Caco-2 (cell line): ENCODE measurements at regions of chr15 and their contacts with region 1.

Region 1: DNA sequence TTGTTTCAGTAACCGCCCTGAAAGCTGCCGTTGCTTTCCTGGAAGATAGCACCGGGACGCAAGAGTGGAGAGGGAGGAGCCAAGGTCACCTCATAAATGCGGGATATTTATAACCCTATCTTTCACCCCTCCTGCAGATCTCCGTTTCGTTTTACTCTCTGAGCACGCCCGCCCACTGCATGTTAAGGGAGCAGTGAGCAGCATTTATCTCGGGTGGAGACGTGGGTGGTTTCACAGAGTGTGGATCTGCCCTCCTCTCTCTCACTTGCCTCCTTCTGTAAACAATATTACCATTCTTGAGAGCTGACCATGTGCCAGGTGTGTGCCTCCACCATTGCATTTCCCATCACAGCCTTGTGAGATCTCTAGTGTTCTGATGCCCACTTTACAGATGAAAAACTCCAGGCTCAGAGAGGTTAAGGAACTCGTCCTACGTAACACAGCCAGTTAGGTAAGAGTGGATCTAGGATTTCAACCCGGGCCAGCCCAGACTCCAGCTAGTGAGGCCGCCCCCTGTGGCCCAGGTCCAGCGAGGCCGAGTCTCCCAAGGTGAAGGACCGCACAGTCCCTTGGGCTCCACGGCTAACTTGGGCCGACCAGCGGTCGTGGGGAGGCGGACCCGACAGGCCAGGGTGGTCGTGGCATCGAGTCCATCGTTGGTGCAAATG is 16.9 kb upstream of the SEMA4B start:
- DNase-seq: peak; percentile 63 to 77
- H3K4me3 ChIP-seq: peak overlapping the region; percentile 74
- H3K4me3 Mint-ChIP-seq: peak overlapping the region; percentile 82
- H3K27ac Mint-ChIP-seq: peak overlapping the region; percentile 69
- H3K4me1 ChIP-seq: peaks cover 11% of the 10 kb centered on the region
- H3K4me1 Mint-ChIP-seq: no peaks in the 10 kb centered on the region
- H3K27me3 ChIP-seq: no peaks in the 10 kb centered on the region
- H3K27me3 Mint-ChIP-seq: no peaks in the 10 kb centered on the region
- CTCF ChIP-seq: peak in 1 of 2 experiments; percentile 17

Region 2: DNA sequence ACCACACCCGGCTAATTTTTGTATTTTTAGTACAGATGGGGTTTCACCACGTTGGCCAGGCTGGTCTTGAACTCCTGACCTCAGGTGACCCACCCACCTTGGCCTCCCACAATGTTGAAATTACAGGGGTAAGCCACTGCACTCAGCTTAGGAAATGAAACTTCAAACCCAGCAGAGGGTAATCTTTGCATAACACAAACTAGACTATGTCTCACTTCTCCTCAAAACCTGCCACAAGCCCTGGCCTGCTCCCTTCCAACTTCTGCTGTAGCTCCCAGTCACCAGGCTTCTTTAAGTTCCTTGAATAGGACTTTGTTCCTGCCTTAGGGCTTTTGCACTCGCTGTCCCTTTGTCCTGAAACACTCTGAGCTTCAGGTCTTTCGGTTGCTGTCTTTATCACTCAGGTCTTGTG is 22.3 kb before region 1 on chr15:
- CTCF ChIA-PET with region 1: interaction called, 13 read pairs
- POLR2A ChIA-PET with region 1: no interaction called
- intact Hi-C with region 1: no loop called
- DNase-seq: peak in 1 of 2 experiments; percentile 40
- H3K4me3 ChIP-seq: no peak overlapping the region
- H3K4me3 Mint-ChIP-seq: no peak overlapping the region
- H3K27ac Mint-ChIP-seq: no peak overlapping the region
- H3K4me1 ChIP-seq: peaks cover 28% of the 10 kb centered on the region
- H3K4me1 Mint-ChIP-seq: peaks cover 18% of the 10 kb centered on the region
- H3K27me3 ChIP-seq: no peaks in the 10 kb centered on the region
- H3K27me3 Mint-ChIP-seq: no peaks in the 10 kb centered on the region
- CTCF ChIP-seq: no peak